ENCODE measurements at regions of chr6 and their contacts with region 1.

Region 1: DNA sequence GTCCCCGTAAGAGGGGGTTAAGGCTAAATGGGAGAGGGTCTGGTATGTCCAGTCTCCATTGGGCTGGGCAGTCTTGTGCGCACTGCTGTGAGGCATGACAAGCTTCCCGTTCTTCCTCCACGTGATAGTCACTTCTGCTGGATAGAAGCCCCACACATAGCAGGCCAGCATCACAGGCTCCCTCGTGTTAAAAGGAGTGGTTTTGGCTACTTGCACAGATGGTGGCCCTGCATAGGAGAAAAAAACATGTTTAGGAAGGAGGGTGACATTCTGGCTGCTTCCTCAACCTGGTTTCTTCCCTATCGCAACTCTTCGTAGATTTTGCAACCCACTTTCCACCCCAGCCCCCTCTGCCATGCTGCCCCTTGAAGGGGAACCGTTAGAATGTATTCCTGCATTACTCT is 3.6 kb downstream of the HLA-DMB start:
- DNase-seq: no peak
- H3K4me3 ChIP-seq: no peak overlapping the region
- H3K27ac ChIP-seq: no peak overlapping the region
- H3K4me1 ChIP-seq: peaks cover 3 to 7% (median 4%) of the 10 kb centered on the region in 3 donors
- H3K27me3 ChIP-seq: no peaks in the 10 kb centered on the region
- CTCF ChIP-seq: no peak

Region 2: GRCh38 chr6:32984605-32985389 is 47.6 kb after region 1 on chr6:
- intact Hi-C with region 1: loop called (anchors 5 kb)
- DNase-seq: peak; percentile 90 to 94 (median 92)
- H3K4me3 ChIP-seq: no peak overlapping the region
- H3K27ac ChIP-seq: no peak overlapping the region
- H3K4me1 ChIP-seq: peaks cover 0 to 2% (median 0%) of the 10 kb centered on the region in 3 donors
- H3K27me3 ChIP-seq: no peaks in the 10 kb centered on the region
- CTCF ChIP-seq: peak; percentile 92

Region 3: GRCh38 chr6:33299237-33299944 is 362.2 kb after region 1 on chr6:
- intact Hi-C with region 1: no loop called
- DNase-seq: peak; percentile 93 to 97 (median 96)
- H3K4me3 ChIP-seq: peak overlapping the region; percentile 81 to 97 (median 92)
- H3K27ac ChIP-seq: peak overlapping the region; percentile 96 to 98
- H3K4me1 ChIP-seq: peaks cover 0 to 13% (median 0%) of the 10 kb centered on the region in 3 donors
- H3K27me3 ChIP-seq: no peaks in the 10 kb centered on the region
- CTCF ChIP-seq: peak; percentile 52

Measured in kidney (tissue), 22 donors.